Transverse colon (tissue), 4 donors: ENCODE measurements at regions of chr13 and their contacts with region 1.

Region 1: GRCh38 chr13:34671137-34671536 is 270.9 kb upstream of the NBEA start:
- DNase-seq: no peak
- H3K4me3 ChIP-seq: no peak overlapping the region
- H3K27ac ChIP-seq: no peak overlapping the region
- H3K4me1 ChIP-seq: no peaks in the 10 kb centered on the region
- H3K27me3 ChIP-seq: no peaks in the 10 kb centered on the region
- CTCF ChIP-seq: no peak
- EP300 ChIP-seq: no peak
- POLR2A ChIP-seq: no peak

Region 2: GRCh38 chr13:34608331-34608730 is 62.8 kb before region 1 on chr13:
- in situ Hi-C with region 1: loop called in 1 of 4 experiments (anchors 10 kb)
- intact Hi-C with region 1: no loop called
- DNase-seq: no peak
- H3K4me3 ChIP-seq: no peak overlapping the region
- H3K27ac ChIP-seq: no peak overlapping the region
- H3K4me1 ChIP-seq: no peaks in the 10 kb centered on the region
- H3K27me3 ChIP-seq: no peaks in the 10 kb centered on the region
- CTCF ChIP-seq: no peak
- EP300 ChIP-seq: no peak
- POLR2A ChIP-seq: no peak

Region 3: DNA sequence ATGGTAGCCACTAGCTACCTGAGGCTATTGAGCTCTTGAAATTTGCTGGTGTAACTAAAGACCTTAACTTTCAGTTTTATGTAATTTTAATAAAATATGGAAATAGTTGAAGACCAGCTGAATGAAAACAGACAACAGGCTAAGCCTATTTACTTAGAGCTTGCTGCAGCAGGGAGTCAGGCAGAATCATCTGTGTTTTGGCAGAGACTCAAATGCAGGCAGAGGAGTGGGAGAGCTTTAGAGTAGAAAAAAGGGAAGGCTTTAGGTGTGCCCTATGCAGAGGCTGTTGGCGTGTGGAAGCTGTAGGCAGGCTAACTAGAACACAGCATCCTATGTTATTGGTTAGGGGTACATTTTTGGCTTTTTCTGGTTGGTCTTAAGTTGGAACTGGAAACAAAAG is 34.0 kb before region 1 on chr13:
- in situ Hi-C with region 1: no loop called
- intact Hi-C with region 1: loop called (anchors 1 kb)
- DNase-seq: no peak
- H3K4me3 ChIP-seq: no peak overlapping the region
- H3K27ac ChIP-seq: no peak overlapping the region
- H3K4me1 ChIP-seq: no peaks in the 10 kb centered on the region
- H3K27me3 ChIP-seq: no peaks in the 10 kb centered on the region
- CTCF ChIP-seq: no peak
- EP300 ChIP-seq: no peak
- POLR2A ChIP-seq: no peak